Activated CD4-positive, alpha-beta memory T cell treated with anti-CD3 and anti-CD28 coated beads, Interleukin-2, amount 10 ng/mL, durations not matched to agents 7 days and 5 days (primary cell): ENCODE measurements at regions of chr11 and their contacts with region 1.

Region 1: DNA sequence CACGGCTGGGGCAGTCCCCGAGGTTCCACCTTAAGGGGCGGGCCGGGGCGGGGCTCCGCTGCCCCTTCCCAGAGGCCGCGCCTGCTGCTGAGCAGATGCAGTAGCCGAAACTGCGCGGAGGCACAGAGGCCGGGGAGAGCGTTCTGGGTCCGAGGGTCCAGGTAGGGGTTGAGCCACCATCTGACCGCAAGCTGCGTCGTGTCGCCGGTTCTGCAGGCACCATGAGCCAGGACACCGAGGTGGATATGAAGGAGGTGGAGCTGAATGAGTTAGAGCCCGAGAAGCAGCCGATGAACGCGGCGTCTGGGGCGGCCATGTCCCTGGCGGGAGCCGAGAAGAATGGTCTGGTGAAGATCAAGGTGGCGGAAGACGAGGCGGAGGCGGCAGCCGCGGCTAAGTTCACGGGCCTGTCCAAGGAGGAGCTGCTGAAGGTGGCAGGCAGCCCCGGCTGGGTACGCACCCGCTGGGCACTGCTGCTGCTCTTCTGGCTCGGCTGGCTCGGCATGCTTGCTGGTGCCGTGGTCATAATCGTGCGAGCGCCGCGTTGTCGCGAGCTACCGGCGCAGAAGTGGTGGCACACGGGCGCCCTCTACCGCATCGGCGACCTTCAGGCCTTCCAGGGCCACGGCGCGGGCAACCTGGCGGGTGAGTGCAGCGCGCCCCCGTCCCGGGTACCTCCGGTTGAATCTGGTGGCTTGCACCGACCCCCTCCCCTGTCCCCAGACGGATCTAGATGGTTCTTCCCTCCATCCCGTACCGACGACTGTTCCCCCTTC is at the start of gene SLC3A2:
- DNase-seq: peak; percentile 92
- H3K4me3 Mint-ChIP-seq: peak within 1 kb of the TSS; percentile 99
- H3K27ac Mint-ChIP-seq: peak within 1 kb of the TSS; percentile 100
- H3K4me1 Mint-ChIP-seq: peaks cover 51% of the 10 kb centered on the region
- H3K27me3 Mint-ChIP-seq: no peaks in the 10 kb centered on the region
- total RNA-seq, gene SLC3A2: 262 to 279 TPM

Region 2: DNA sequence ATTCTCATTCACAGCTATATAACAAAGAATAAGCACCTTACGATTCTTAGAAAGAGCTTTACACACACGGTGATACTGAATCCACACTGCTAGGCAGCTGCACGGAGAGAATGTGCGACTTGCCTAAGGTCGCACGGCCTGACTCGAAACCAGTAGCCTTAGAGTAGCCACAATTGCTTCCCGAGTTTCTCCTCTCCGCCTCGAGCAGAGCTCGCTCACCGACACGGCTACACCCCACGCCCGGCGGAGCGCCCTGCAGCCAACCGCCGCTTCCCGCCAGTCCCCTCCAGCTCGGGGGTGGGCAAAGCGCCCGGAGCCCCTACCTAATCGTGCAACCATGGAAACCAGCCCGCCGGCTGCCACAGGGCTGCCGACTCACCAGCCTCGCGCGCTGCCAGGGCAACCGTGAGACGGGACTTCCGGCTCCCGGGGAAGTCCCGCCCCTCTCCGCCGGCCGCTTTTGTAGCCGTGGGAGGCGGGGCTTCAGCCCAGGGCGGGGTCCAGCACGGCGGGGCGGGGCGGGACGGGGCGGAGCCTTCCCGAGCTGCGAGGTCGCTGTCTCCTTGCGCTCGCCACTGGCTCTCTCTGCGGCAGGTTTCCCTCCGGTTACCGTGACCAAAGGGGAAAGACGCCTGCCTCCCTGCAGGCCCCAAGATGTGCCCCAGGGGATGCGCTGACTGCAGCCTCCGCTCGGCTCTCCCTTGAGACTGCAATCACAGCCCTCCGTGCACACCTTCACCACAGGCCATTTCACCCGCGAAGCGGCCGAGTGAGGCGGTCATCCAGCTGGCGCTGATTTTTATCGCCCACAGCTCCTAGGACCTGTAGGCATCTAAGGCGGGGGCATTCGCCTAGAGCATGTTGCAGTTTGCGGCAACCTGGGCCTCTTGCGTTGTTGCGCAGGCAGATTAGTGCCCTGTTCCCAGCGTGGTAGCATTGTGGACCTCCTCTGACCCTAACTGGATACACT is 174.8 kb before region 1 on chr11:
- CTCF ChIA-PET with region 1: interaction called, 4 read pairs
- POLR2A ChIA-PET with region 1: interaction called, 16 read pairs
- DNase-seq: peak; percentile 96
- H3K4me3 Mint-ChIP-seq: peak overlapping the region; percentile 92
- H3K27ac Mint-ChIP-seq: peak overlapping the region; percentile 69
- H3K4me1 Mint-ChIP-seq: peaks cover 56% of the 10 kb centered on the region
- H3K27me3 Mint-ChIP-seq: no peaks in the 10 kb centered on the region

Region 3: GRCh38 chr11:62753736-62754603 is 127.0 kb before region 1 on chr11 and contains the start of gene ZBTB3:
- CTCF ChIA-PET with region 1: interaction called, 4 read pairs
- POLR2A ChIA-PET with region 1: interaction called, 24 read pairs
- DNase-seq: peak; percentile 97
- H3K4me3 Mint-ChIP-seq: peak within 1 kb of the TSS; percentile 95
- H3K27ac Mint-ChIP-seq: peak within 1 kb of the TSS; percentile 93
- H3K4me1 Mint-ChIP-seq: peaks cover 33% of the 10 kb centered on the region
- H3K27me3 Mint-ChIP-seq: no peaks in the 10 kb centered on the region
- total RNA-seq, gene ZBTB3: 13.3 to 13.4 TPM

Region 4: DNA sequence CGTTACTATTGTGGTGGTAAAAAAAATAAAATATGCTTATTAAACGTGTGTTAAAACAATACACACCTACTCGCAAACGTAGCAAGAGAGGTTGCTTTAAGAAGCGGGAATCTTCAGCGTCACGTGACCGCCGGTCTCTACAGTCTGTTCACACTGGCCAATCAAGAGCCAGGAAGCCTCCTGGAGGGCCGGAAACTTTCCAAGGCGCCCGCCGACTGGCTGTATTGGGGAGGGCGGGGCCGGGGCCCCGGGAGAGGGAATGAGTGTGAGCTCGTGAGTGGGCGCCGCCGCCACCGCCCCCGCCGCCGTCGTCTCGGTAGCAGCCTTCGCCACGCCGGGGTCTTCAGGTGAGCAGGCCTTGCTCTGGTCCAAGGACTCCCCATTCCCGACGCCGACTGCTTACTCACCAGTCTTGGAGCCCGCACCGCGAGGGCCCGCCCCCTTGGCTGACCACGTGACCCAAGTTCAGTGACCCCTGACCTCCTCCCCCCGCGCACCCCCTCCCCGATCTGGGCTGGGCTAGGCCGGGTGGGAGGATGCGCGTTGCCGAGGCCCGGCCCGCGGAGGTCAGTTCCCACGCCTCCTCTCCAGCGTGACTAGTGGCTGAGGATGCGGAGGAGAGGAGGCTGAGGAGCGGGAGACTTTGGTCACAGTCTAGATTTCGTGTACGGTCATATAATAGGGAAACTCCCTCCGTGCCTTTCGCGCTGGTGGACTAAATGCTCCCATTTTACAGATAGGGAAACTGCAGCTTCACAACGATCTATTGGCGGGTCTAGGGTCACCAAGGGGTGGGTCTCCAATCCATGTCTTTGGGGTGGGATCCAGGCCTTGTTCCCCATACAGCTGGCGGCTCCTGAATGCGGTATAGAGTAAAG is 109.6 kb before region 1 on chr11 and contains the start of gene TAF6L:
- CTCF ChIA-PET with region 1: interaction called, 6 read pairs
- POLR2A ChIA-PET with region 1: interaction called, 21 read pairs
- DNase-seq: peak; percentile 96
- H3K4me3 Mint-ChIP-seq: peak within 1 kb of the TSS; percentile 87
- H3K27ac Mint-ChIP-seq: peak within 1 kb of the TSS; percentile 88
- H3K4me1 Mint-ChIP-seq: peaks cover 30% of the 10 kb centered on the region
- H3K27me3 Mint-ChIP-seq: no peaks in the 10 kb centered on the region
- total RNA-seq, gene TAF6L: 15.2 to 16.0 TPM

Region 5: GRCh38 chr11:62831520-62832335 is 49.3 kb before region 1 on chr11 and contains the start of gene STX5:
- CTCF ChIA-PET with region 1: interaction called, 4 read pairs
- POLR2A ChIA-PET with region 1: interaction called, 25 read pairs
- DNase-seq: peak; percentile 100
- H3K4me3 Mint-ChIP-seq: peak within 1 kb of the TSS; percentile 84
- H3K27ac Mint-ChIP-seq: peak within 1 kb of the TSS; percentile 91
- H3K4me1 Mint-ChIP-seq: peaks cover 33% of the 10 kb centered on the region
- H3K27me3 Mint-ChIP-seq: no peaks in the 10 kb centered on the region
- total RNA-seq, gene STX5: 40.6 to 41.6 TPM

Region 6: GRCh38 chr11:62860835-62861563 is 20.0 kb before region 1 on chr11:
- CTCF ChIA-PET with region 1: interaction called, 44 read pairs
- POLR2A ChIA-PET with region 1: interaction called, 234 read pairs
- DNase-seq: no peak
- H3K4me3 Mint-ChIP-seq: no peak overlapping the region
- H3K27ac Mint-ChIP-seq: peak overlapping the region; percentile 63
- H3K4me1 Mint-ChIP-seq: peaks cover 67% of the 10 kb centered on the region
- H3K27me3 Mint-ChIP-seq: no peaks in the 10 kb centered on the region

Region 7: GRCh38 chr11:62914416-62914815 is 33.4 kb after region 1 on chr11:
- CTCF ChIA-PET with region 1: no interaction called
- POLR2A ChIA-PET with region 1: no interaction called
- DNase-seq: no peak
- H3K4me3 Mint-ChIP-seq: no peak overlapping the region
- H3K27ac Mint-ChIP-seq: no peak overlapping the region
- H3K4me1 Mint-ChIP-seq: peaks cover 4% of the 10 kb centered on the region
- H3K27me3 Mint-ChIP-seq: peaks cover 4% of the 10 kb centered on the region

Region 8: GRCh38 chr11:62931499-62932278 is 50.7 kb after region 1 on chr11:
- CTCF ChIA-PET with region 1: no interaction called
- POLR2A ChIA-PET with region 1: no interaction called
- DNase-seq: no peak
- H3K4me3 Mint-ChIP-seq: no peak overlapping the region
- H3K27ac Mint-ChIP-seq: no peak overlapping the region
- H3K4me1 Mint-ChIP-seq: no peaks in the 10 kb centered on the region
- H3K27me3 Mint-ChIP-seq: peaks cover 42% of the 10 kb centered on the region

Region 9: DNA sequence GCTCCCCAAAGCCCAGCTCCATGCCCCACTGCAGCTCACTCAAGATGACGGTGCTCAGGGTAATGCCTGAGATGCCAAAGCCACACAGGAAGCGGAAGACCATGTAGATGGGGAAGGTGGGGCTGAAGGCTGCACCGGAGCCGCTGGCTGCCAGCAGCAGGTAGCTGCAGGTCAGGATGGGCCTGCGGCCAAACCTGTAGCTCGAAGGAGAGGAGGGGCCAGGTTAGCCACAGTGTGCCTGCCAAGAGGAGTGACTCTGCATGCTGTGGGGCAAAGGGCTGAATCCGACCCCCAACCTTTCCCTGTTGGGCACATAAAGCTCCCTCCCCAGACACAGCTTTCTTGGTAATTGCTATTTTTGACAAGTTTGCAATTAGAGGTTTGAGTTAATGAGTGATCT is 118.7 kb after region 1 on chr11:
- CTCF ChIA-PET with region 1: no interaction called
- POLR2A ChIA-PET with region 1: no interaction called
- DNase-seq: no peak
- H3K4me3 Mint-ChIP-seq: no peak overlapping the region
- H3K27ac Mint-ChIP-seq: no peak overlapping the region
- H3K4me1 Mint-ChIP-seq: peaks cover 2% of the 10 kb centered on the region
- H3K27me3 Mint-ChIP-seq: peaks cover 2% of the 10 kb centered on the region

Region 10: DNA sequence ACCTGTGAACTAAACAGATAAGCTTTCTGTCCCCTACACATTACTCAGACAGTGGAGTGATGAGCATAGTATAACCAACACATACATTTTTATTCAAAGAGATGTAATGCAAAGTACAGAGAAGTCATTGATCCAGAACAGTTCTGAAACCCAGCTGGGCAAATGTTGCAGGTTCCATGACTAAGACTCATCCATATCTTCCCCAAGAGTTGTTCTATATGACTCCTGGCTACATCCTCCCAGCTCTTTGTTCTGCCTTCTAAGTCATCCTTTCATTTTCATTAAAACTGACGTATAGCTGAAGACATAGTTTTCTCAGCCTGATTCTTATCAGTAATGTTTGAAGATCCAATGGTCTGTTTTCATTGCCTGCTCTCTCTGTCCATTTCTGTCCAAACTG is 562.7 kb after region 1 on chr11:
- CTCF ChIA-PET with region 1: no interaction called
- POLR2A ChIA-PET with region 1: no interaction called
- DNase-seq: no peak
- H3K4me3 Mint-ChIP-seq: no peak overlapping the region
- H3K27ac Mint-ChIP-seq: no peak overlapping the region
- H3K4me1 Mint-ChIP-seq: peaks cover 36% of the 10 kb centered on the region
- H3K27me3 Mint-ChIP-seq: no peaks in the 10 kb centered on the region